ENCODE measurements at regions of chr4 and their contacts with region 1.

Region 1: DNA sequence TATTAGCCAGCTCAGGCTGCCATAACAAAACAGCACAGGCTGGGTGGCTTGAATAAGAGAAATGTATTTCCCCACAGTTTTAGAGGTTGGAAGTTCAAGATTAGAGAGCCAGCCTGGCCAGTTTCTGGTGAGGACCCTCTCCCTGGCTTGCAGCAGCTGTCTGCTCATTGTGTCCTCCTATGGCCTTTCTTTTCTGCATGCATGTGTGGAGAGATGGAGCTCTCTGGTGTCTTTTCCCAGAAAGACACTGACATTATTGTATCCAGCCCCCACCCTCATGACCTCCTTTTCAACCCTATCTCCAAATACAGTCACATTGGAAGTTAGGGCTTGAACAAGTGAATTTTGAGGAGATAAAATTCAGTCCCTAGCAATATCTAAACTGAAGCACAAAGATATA is 263.8 kb upstream of the PABPC4L start:
- DNase-seq: no peak
- H3K4me3 ChIP-seq: no peak overlapping the region
- H3K27ac ChIP-seq: no peak overlapping the region
- H3K4me1 ChIP-seq: no peaks in the 10 kb centered on the region
- H3K27me3 ChIP-seq: no peaks in the 10 kb centered on the region
- CTCF ChIP-seq: no peak
- POLR2A ChIP-seq: no peak

Region 2: GRCh38 chr4:133863153-133863552 is 602.3 kb before region 1 on chr4:
- CTCF ChIA-PET with region 1: no interaction called
- POLR2A ChIA-PET with region 1: no interaction called
- dilution Hi-C with region 1: no loop called
- intact Hi-C with region 1: loop called (anchors 5 kb)
- DNase-seq: no peak
- H3K4me3 ChIP-seq: no peak overlapping the region
- H3K27ac ChIP-seq: no peak overlapping the region
- H3K4me1 ChIP-seq: peaks cover 4% of the 10 kb centered on the region
- H3K27me3 ChIP-seq: no peaks in the 10 kb centered on the region
- CTCF ChIP-seq: no peak
- POLR2A ChIP-seq: no peak

Region 3: DNA sequence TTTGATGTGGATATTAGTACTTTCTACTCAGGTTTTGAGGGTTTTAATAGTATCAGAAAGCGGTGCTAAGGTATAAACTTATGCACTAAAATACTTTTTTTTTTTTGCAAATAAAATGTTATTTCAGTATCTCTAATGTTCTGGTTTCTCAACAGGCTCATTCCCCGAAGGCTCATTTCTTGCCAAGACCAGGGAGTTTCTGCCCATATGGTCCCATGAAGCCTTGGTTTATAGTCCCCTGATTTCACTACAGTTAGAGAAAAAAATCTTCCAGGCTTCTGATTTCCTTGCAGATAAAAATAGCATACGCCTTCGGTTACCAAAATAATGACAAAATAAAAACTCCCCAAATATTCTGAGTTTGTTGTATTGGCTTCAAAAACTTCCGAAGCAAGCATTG is 550.4 kb after region 1 on chr4:
- CTCF ChIA-PET with region 1: no interaction called
- POLR2A ChIA-PET with region 1: no interaction called
- dilution Hi-C with region 1: no loop called
- intact Hi-C with region 1: no loop called
- DNase-seq: no peak
- H3K4me3 ChIP-seq: no peak overlapping the region
- H3K27ac ChIP-seq: no peak overlapping the region
- H3K4me1 ChIP-seq: no peaks in the 10 kb centered on the region
- H3K27me3 ChIP-seq: no peaks in the 10 kb centered on the region
- CTCF ChIP-seq: no peak
- POLR2A ChIP-seq: no peak

Measured in endothelial cell of umbilical vein (primary cell).